A549 (cell line): ENCODE measurements at regions of chr1 and their contacts with region 1.

Region 1: GRCh38 chr1:7646981-7647901 is 123.9 kb upstream of the VAMP3 start:
- DNase-seq: peak; percentile 46 to 88
- ATAC-seq: peak; percentile 69 to 92; a peak in 5 of 6 replicates
- H3K4me3 ChIP-seq: no peak overlapping the region
- H3K27ac ChIP-seq: peak overlapping the region; percentile 55 to 92
- H3K4me1 ChIP-seq: peaks cover 4% of the 10 kb centered on the region; the same call in 2 of the 3 replicates
- CTCF ChIP-seq: peak; percentile 83
- EP300 ChIP-seq: no peak
- POLR2A ChIP-seq: no peak
- RAD21 ChIP-seq: peak; percentile 90 to 97

Region 2: DNA sequence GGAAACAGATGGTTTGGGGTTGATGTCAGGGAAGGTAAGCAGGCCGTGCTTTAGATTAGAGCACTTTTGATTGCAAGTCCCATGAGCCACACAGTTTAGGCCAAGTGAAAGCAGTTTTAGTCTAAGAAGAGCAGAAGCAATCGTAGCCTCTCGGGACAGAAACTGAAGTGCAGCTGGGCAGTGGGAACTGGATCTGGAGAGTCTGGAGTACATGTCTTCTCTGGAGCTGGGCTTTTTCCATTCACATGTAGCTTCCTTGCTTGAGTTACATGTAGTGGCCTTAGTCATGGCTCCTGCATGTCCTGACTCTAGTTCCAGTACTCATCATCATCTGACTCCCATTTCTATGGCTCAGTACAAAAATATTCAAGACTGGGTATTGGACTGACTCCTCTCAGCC is 845.3 kb before region 1 on chr1:
- CTCF ChIA-PET with region 1: interaction called, 10 read pairs
- POLR2A ChIA-PET with region 1: no interaction called
- DNase-seq: no peak
- ATAC-seq: peak; percentile 30 to 38; a peak in 3 of 6 replicates
- H3K4me3 ChIP-seq: no peak overlapping the region
- H3K27ac ChIP-seq: peak overlapping the region; percentile 32 to 64; a peak in 5 of 6 replicates
- H3K4me1 ChIP-seq: peaks cover 59% of the 10 kb centered on the region
- CTCF ChIP-seq: no peak
- EP300 ChIP-seq: no peak
- POLR2A ChIP-seq: no peak
- RAD21 ChIP-seq: no peak

Region 3: DNA sequence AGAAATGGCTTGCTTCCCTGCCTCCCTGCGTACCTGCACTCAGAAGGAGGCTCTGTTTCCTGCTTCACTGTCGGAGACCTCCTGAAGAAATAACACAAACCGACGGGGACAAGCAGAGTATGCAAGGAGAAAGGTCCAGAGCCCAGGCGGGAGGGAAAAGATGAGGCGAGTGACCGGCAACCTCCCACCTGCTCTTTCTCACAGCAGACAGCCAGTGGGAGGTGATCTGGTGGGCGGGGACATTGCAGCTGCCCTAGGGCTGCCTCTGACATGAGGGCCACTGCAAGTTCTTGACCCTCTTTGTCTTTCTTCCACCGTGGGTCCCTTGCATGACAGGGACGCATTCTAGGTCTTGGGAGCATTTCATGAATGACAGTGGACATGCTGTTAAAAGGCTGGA is 493.8 kb before region 1 on chr1:
- CTCF ChIA-PET with region 1: no interaction called
- POLR2A ChIA-PET with region 1: interaction called, 11 read pairs
- DNase-seq: no peak
- ATAC-seq: no peak
- H3K4me3 ChIP-seq: no peak overlapping the region
- H3K27ac ChIP-seq: no peak overlapping the region
- H3K4me1 ChIP-seq: no peaks in the 10 kb centered on the region
- CTCF ChIP-seq: no peak
- EP300 ChIP-seq: no peak
- POLR2A ChIP-seq: no peak
- RAD21 ChIP-seq: no peak